IMR-90 (cell line): ENCODE measurements at regions of chr14 and their contacts with region 1.

Region 1: DNA sequence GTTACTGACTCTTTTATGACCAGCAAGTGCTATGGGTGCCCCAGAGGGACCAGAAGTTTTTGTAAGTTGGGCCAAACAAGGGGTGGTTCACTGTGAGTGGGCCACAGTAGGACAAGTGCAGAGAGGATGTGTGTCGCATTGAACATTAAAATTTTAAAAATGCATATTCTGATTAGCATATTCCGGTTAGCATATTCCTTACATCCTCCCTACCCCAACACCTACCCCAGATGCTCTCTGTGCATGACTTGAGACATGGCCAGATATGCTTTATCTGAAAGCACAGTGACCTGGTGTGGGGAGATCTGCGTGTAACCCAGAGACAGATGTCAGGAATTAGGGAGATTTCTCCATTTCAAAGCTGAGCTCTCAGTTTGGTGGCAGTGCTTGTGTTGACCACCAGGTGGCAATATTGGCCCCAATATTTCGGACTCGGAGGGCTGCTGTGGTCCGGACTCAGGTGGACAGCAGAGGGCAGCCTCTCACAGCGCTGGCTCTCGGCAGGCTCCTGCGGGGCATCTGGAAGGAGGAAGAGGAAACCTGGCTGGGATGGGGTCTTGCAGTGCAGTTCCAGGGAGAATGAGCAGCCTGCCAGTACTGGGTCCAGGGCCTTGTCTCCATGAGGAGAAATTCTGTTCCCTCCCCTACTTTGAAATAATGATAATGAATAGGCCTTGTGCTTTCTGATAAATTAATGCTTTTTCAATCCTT is 1.6 kb upstream of the CEBPE start:
- DNase-seq: peak; percentile 82
- ATAC-seq: peak; percentile 97
- H3K4me3 ChIP-seq: no peak overlapping the region
- H3K27ac ChIP-seq: no peak overlapping the region
- H3K4me1 ChIP-seq: peaks cover 5% of the 10 kb centered on the region; the same call in 1 of the 2 replicates
- H3K27me3 ChIP-seq: no peaks in the 10 kb centered on the region; the same call in 1 of the 2 replicates
- CTCF ChIP-seq: peak; percentile 100; the same call in 1 of the 2 replicates
- POLR2A ChIP-seq: peak; percentile 53; the same call in 1 of the 2 replicates
- RAD21 ChIP-seq: peak; percentile 100

Region 2: GRCh38 chr14:22918804-22919600 is 201.7 kb before region 1 on chr14 and contains the start of gene RBM23:
- CTCF ChIA-PET with region 1: no interaction called
- POLR2A ChIA-PET with region 1: no interaction called
- dilution Hi-C with region 1: no loop called
- in situ Hi-C with region 1: no loop called
- intact Hi-C with region 1: no loop called
- DNase-seq: peak; percentile 100
- ATAC-seq: peak; percentile 97
- H3K4me3 ChIP-seq: peak within 1 kb of the TSS; percentile 57
- H3K27ac ChIP-seq: peak within 1 kb of the TSS; percentile 82
- H3K4me1 ChIP-seq: peaks cover 9% of the 10 kb centered on the region
- H3K27me3 ChIP-seq: no peaks in the 10 kb centered on the region
- CTCF ChIP-seq: no peak
- POLR2A ChIP-seq: peak; percentile 88
- RAD21 ChIP-seq: no peak
- total RNA-seq, gene RBM23: 375 and 830 TPM in 2 replicates

Region 3: GRCh38 chr14:23154964-23155587 is 34.4 kb after region 1 on chr14:
- CTCF ChIA-PET with region 1: interaction called, 5 read pairs
- POLR2A ChIA-PET with region 1: no interaction called
- dilution Hi-C with region 1: no loop called
- in situ Hi-C with region 1: no loop called
- intact Hi-C with region 1: loop called (anchors 2 kb)
- DNase-seq: peak; percentile 89
- ATAC-seq: peak; percentile 98
- H3K4me3 ChIP-seq: no peak overlapping the region
- H3K27ac ChIP-seq: peak overlapping the region; percentile 53; the same call in 1 of the 2 replicates
- H3K4me1 ChIP-seq: peaks cover 4% of the 10 kb centered on the region
- H3K27me3 ChIP-seq: peaks cover 18% of the 10 kb centered on the region
- CTCF ChIP-seq: no peak
- POLR2A ChIP-seq: no peak
- RAD21 ChIP-seq: no peak

Region 4: DNA sequence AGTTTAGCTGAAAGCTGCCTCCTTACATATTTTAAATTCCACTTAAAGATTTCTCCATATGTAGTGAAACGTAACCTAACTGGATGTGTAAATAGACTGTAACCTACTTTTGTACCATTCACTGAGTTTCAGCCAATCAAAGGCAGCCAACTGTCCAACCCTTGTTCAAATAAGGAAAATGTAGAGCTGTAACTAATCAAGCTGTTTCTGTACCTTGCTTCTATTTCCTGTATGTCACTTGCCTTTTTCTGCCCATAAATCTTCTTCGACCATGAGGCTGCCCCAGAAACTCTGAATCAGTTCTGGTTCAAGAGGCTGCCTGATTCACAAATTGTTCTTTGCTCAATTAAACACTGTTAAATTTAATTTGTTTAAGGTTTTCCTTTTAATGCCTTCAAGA is 56.5 kb after region 1 on chr14:
- CTCF ChIA-PET with region 1: interaction called, 21 read pairs
- POLR2A ChIA-PET with region 1: no interaction called
- dilution Hi-C with region 1: no loop called
- in situ Hi-C with region 1: loop called (anchors 5 kb)
- intact Hi-C with region 1: no loop called
- DNase-seq: no peak
- ATAC-seq: no peak
- H3K4me3 ChIP-seq: no peak overlapping the region
- H3K27ac ChIP-seq: no peak overlapping the region
- H3K4me1 ChIP-seq: no peaks in the 10 kb centered on the region
- H3K27me3 ChIP-seq: peaks cover 27% of the 10 kb centered on the region
- CTCF ChIP-seq: no peak
- POLR2A ChIP-seq: no peak
- RAD21 ChIP-seq: no peak

Region 5: GRCh38 chr14:23186913-23187654 is 66.4 kb after region 1 on chr14:
- CTCF ChIA-PET with region 1: interaction called, 76 read pairs
- POLR2A ChIA-PET with region 1: interaction called, 3 read pairs
- dilution Hi-C with region 1: no loop called
- in situ Hi-C with region 1: loop called (anchors 5 kb)
- intact Hi-C with region 1: loop called (anchors 1 kb)
- DNase-seq: peak; percentile 76
- ATAC-seq: peak; percentile 88
- H3K4me3 ChIP-seq: no peak overlapping the region
- H3K27ac ChIP-seq: no peak overlapping the region
- H3K4me1 ChIP-seq: no peaks in the 10 kb centered on the region
- H3K27me3 ChIP-seq: peaks cover 15% of the 10 kb centered on the region
- CTCF ChIP-seq: peak; percentile 95
- POLR2A ChIP-seq: no peak
- RAD21 ChIP-seq: peak; percentile 94